PC-9 (cell line): ENCODE measurements at regions of chr1 and their contacts with region 1.

Region 1: GRCh38 chr1:246897302-246897701 is 34.4 kb downstream of the AHCTF1 start:
- DNase-seq: no peak
- H3K4me3 ChIP-seq: no peak overlapping the region
- H3K27ac ChIP-seq: no peak overlapping the region
- H3K4me1 ChIP-seq: no peaks in the 10 kb centered on the region
- H3K27me3 ChIP-seq: no peaks in the 10 kb centered on the region
- CTCF ChIP-seq: no peak

Region 2: DNA sequence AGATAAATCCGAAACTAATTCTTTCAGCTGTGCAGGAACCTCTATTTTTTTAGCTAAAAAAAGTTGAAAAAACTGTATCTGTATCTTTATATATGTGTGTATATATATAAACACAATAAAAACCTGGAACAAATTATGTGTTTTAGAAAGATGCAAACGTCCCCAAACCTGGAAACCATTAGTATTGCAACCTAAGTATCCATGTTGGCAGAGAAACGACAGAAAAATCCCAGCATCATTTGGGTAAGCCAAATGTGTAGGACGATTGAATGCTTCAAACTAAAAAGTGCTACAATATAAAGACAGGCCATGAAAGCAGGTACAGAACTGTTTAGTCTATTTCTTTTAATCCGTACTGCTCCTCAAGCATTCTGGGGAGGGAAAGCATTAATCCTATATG is 53.4 kb before region 1 on chr1:
- CTCF ChIA-PET with region 1: no interaction called
- POLR2A ChIA-PET with region 1: no interaction called
- intact Hi-C with region 1: no loop called
- DNase-seq: no peak
- H3K4me3 ChIP-seq: no peak overlapping the region
- H3K27ac ChIP-seq: no peak overlapping the region
- H3K4me1 ChIP-seq: no peaks in the 10 kb centered on the region
- H3K27me3 ChIP-seq: no peaks in the 10 kb centered on the region
- CTCF ChIP-seq: no peak

Region 3: DNA sequence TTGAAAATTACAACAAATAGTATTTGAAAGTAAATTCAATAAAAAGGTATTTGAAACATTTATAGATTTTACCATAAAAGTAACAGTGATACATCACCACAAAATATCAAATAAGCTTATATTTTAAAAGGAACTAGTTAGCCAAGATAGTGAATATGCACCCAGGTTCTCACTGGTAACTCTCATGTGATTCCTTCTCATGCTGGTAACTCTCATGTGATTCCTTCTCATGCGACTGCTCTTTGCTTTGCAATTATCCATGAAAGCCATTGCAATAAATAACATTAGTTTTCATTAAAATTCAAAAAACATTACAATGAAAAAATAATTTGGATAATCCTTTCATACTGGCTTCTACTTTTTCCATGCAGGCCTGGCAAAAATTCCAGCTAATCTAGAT is 40.9 kb before region 1 on chr1:
- CTCF ChIA-PET with region 1: no interaction called
- POLR2A ChIA-PET with region 1: no interaction called
- intact Hi-C with region 1: loop called (anchors 5 kb)
- DNase-seq: no peak
- H3K4me3 ChIP-seq: no peak overlapping the region
- H3K27ac ChIP-seq: no peak overlapping the region
- H3K4me1 ChIP-seq: no peaks in the 10 kb centered on the region
- H3K27me3 ChIP-seq: no peaks in the 10 kb centered on the region
- CTCF ChIP-seq: no peak